CD4-positive, alpha-beta memory T cell (primary cell): ENCODE measurements at regions of chr22 and their contacts with region 1.

Region 1: DNA sequence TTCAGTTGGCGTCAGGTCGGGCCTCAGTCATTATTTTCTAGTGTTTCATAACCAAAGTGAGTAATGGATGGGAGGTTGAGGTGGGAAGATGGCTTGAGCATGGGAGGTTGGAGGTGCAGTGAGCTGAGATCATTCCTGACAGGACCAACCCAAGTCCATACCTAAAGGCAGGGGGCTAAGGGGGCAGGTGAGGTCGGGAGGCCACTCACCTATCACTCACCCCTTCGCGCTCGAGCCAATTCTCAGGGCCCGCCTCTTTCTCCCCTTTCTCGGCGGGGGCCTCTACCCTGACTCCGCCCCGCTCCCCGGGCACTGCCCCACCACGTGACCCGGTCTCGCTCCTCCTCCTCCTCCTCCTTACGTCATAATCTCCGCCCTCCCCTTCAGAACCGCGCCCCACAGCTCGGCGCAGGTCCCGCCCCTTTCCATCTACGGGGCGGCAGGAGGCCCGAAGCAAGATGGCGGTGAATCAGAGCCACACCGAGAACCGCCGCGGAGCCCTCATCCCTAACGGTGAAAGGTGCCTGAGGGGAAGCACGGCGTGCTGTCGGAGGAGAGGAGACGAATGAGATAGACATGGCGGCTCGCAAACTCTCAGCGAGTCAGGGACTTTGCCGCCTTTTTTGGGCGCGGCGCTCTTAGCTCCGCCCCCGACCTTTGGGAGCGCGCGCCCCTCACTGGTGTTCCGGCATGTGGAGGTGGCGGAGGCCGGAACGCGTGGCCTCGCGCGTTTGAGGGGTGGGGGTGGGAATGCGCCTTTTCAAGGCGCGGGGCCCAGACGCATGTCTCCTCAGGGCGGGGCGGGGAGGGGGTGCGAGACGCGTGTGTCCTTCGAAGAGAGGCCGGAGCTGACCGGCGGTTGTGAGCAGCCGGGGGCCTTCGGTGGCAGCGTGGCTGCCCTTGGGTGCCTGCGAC is at the start of gene WBP2NL:
- DNase-seq: peak; percentile 90 to 92 (median 92)
- H3K4me3 ChIP-seq: peak within 1 kb of the TSS; percentile 6 to 74
- H3K4me3 Mint-ChIP-seq: peak within 1 kb of the TSS; percentile 93 to 99 (median 98)
- H3K27ac ChIP-seq: peak within 1 kb of the TSS; percentile 61
- H3K27ac Mint-ChIP-seq: peak within 1 kb of the TSS; percentile 67 to 100 (median 98)
- H3K4me1 ChIP-seq: peaks cover 21% of the 10 kb centered on the region
- H3K4me1 Mint-ChIP-seq: peaks cover 13 to 35% (median 19%) of the 10 kb centered on the region in 4 donors
- H3K27me3 ChIP-seq: no peaks in the 10 kb centered on the region
- H3K27me3 Mint-ChIP-seq: no peaks in the 10 kb centered on the region
- total RNA-seq, gene WBP2NL: 3.5 to 5.4 TPM

Region 2: GRCh38 chr22:42070517-42071422 is 72.2 kb after region 1 on chr22 and contains the start of gene NAGA:
- CTCF ChIA-PET with region 1: interaction called, 5 read pairs
- POLR2A ChIA-PET with region 1: interaction called, 15 read pairs
- intact Hi-C with region 1: loop called (anchors 1 kb)
- DNase-seq: peak; percentile 89 to 95 (median 90)
- H3K4me3 ChIP-seq: peak within 1 kb of the TSS; percentile 37 to 51
- H3K4me3 Mint-ChIP-seq: peak within 1 kb of the TSS; percentile 92 to 95 (median 92)
- H3K27ac ChIP-seq: peak within 1 kb of the TSS; percentile 74
- H3K27ac Mint-ChIP-seq: peak within 1 kb of the TSS; percentile 93 to 97 (median 94)
- H3K4me1 ChIP-seq: peaks cover 40% of the 10 kb centered on the region
- H3K4me1 Mint-ChIP-seq: peaks cover 20 to 59% (median 39%) of the 10 kb centered on the region in 4 donors
- H3K27me3 ChIP-seq: no peaks in the 10 kb centered on the region
- H3K27me3 Mint-ChIP-seq: no peaks in the 10 kb centered on the region
- total RNA-seq, gene NAGA: 13.9 to 14.5 TPM